ENCODE measurements at regions of chr15 and their contacts with region 1.

Region 1: GRCh38 chr15:24017465-24017864 is 330.4 kb upstream of the NDN start:
- DNase-seq: no peak
- H3K4me3 ChIP-seq: no peak overlapping the region
- H3K27ac ChIP-seq: no peak overlapping the region
- H3K4me1 ChIP-seq: no peaks in the 10 kb centered on the region
- H3K27me3 ChIP-seq: no peaks in the 10 kb centered on the region
- CTCF ChIP-seq: no peak
- EP300 ChIP-seq: no peak
- POLR2A ChIP-seq: no peak

Region 2: GRCh38 chr15:24075420-24076089 is 58.1 kb after region 1 on chr15:
- intact Hi-C with region 1: loop called in 1 of 4 experiments (anchors 10 kb)
- DNase-seq: no peak
- H3K4me3 ChIP-seq: no peak overlapping the region
- H3K27ac ChIP-seq: no peak overlapping the region
- H3K4me1 ChIP-seq: no peaks in the 10 kb centered on the region
- H3K27me3 ChIP-seq: no peaks in the 10 kb centered on the region
- CTCF ChIP-seq: no peak
- EP300 ChIP-seq: no peak
- POLR2A ChIP-seq: no peak